ENCODE measurements at regions of chr3 and their contacts with region 1.

Region 1: GRCh38 chr3:33153782-33154181 is 40.0 kb downstream of the CRTAP start:
- DNase-seq: no peak
- ATAC-seq: no peak
- H3K4me3 Mint-ChIP-seq: no peak overlapping the region
- H3K27ac Mint-ChIP-seq: no peak overlapping the region
- H3K4me1 Mint-ChIP-seq: peaks cover 3% of the 10 kb centered on the region; the same call in 1 of the 2 replicates
- H3K27me3 Mint-ChIP-seq: peaks cover 2% of the 10 kb centered on the region; the same call in 1 of the 2 replicates
- CTCF ChIP-seq: no peak

Region 2: DNA sequence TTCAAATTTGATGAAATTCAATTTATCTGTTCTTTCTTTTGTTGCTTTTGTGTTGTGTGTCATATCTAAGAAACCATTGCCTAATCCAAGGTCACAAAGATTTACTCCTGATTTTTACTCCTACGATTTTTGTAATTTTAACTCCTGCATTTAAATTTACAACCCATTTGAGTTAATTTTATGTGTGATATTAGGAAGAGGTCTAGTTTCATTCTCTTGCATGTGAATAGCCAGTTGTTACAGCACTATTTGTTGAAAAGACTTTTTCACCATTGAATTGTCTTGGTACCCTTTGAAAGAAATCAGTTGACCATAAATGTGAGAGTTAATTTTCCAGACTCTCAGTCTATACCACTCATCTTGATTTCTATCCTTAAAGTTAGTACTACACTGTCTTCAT is 16.1 kb before region 1 on chr3:
- CTCF ChIA-PET with region 1: interaction called, 10 read pairs
- POLR2A ChIA-PET with region 1: no interaction called
- DNase-seq: no peak
- ATAC-seq: no peak
- H3K4me3 Mint-ChIP-seq: no peak overlapping the region
- H3K27ac Mint-ChIP-seq: no peak overlapping the region
- H3K4me1 Mint-ChIP-seq: peaks cover 2% of the 10 kb centered on the region; the same call in 1 of the 2 replicates
- H3K27me3 Mint-ChIP-seq: no peaks in the 10 kb centered on the region
- CTCF ChIP-seq: no peak